Mammary epithelial cell (primary cell): ENCODE measurements at regions of chr9 and their contacts with region 1.

Region 1: DNA sequence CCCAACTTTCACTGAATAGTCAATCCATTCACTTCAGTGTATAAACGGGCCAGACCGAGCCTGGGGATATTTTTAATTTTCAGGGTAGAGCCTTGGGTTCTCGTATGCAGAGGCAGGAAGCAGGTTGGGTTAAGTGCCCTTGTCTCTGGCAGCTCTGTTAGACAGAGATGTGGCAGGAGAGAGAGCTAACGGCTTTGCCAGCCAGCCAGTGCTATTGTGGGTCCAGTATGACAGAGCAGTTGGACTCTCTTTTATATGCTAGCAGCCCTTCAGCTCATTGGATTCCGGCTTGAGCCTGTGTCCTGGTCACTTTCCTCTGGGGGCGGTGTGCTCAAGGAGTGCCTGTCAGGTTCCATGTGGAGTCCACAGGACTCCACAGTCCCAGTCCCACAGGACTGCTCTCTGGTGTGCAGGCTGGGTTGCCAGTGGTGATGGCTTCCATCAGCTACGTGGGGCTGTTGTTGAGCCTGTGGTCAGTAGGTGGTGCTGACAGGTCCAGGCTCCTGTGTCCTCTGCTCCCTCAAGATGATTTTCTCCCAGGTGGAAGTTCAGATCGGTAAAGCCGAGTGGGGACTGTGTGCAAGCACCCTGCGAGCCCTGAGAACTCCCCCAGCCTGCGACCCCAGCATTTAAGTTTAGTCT is 14.3 kb downstream of the CLTA start:
- DNase-seq: no peak
- H3K4me3 ChIP-seq: no peak overlapping the region
- H3K27ac ChIP-seq: no peak overlapping the region
- H3K4me1 ChIP-seq: peaks cover 16% of the 10 kb centered on the region
- H3K27me3 ChIP-seq: no peaks in the 10 kb centered on the region
- CTCF ChIP-seq: peak in 1 of 2 donors; percentile 24

Region 2: DNA sequence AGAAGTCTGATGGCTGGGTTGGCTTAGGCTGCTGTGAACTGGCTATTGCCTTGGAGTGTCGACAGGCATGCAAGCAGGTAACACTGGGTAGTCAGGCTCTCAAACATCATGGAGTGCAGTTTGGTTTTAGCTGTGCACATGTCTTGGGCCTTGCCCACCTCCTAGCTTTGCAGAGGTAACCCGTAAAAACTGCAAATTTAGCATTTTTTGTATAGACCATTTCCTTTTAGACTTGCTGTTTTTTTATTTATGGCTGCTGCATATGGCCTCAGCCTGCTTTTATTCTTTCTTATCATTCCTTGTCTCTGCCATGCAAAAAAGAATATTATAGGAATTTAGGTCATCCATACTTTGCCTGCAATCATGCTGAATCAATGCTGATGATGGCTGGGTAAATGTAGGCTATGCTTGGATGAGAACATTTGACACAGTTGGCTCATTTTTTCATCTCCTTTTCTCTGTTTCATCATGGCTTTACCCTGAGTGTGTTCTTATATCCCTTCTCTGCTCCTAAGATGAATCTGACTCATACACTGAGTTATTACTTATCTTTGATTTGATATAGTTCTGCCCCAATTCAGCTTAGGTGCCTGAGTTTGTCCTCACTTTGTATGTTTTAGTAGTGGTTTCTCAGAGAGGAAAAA is 141.1 kb before region 1 on chr9:
- CTCF ChIA-PET with region 1: no interaction called
- dilution Hi-C with region 1: no loop called
- in situ Hi-C with region 1: no loop called
- intact Hi-C with region 1: no loop called
- DNase-seq: no peak
- H3K4me3 ChIP-seq: no peak overlapping the region
- H3K27ac ChIP-seq: no peak overlapping the region
- H3K4me1 ChIP-seq: no peaks in the 10 kb centered on the region
- H3K27me3 ChIP-seq: no peaks in the 10 kb centered on the region
- CTCF ChIP-seq: no peak

Region 3: DNA sequence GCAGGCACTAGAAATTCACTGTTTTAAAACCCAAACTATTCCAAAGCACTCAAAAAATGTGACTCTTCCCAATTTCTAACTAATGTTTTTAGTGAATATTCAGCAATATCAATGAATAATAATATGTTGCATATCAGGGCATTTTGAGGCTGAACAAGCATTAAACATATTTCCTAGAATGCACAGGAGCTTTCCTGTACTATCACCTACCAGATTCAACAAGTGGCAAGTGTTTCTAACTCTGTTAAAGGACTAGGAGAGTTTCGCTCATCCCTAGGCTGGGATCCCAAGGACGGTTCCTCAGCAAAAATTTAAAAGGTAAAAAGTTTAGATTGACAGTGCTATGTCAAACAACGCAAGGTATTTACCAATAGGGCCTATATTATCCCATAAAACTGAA is 32.2 kb after region 1 on chr9:
- CTCF ChIA-PET with region 1: interaction called, 17 read pairs
- dilution Hi-C with region 1: no loop called
- in situ Hi-C with region 1: no loop called
- intact Hi-C with region 1: loop called (anchors 1 kb)
- DNase-seq: no peak
- H3K4me3 ChIP-seq: no peak overlapping the region
- H3K27ac ChIP-seq: no peak overlapping the region
- H3K4me1 ChIP-seq: no peaks in the 10 kb centered on the region
- H3K27me3 ChIP-seq: no peaks in the 10 kb centered on the region
- CTCF ChIP-seq: no peak